ENCODE measurements at regions of chr7 and their contacts with region 1.

Region 1: GRCh38 chr7:35985126-35985754 is 167.8 kb upstream of the EEPD1 start:
- DNase-seq: peak; percentile 83 to 88 (median 84)
- ATAC-seq: peak; percentile 94 to 99 (median 96)
- H3K4me3 ChIP-seq: no peak overlapping the region
- H3K27ac ChIP-seq: no peak overlapping the region
- H3K4me1 ChIP-seq: peaks cover 0 to 3% (median 0%) of the 10 kb centered on the region in 12 donors
- H3K27me3 ChIP-seq: no peaks in the 10 kb centered on the region
- CTCF ChIP-seq: peak; percentile 87 to 97 (median 92)
- POLR2A ChIP-seq: no peak

Region 2: GRCh38 chr7:35701287-35701900 is 283.8 kb before region 1 on chr7:
- intact Hi-C with region 1: loop called in 1 of 10 experiments (anchors 10 kb)
- DNase-seq: no peak
- ATAC-seq: no peak
- H3K4me3 ChIP-seq: no peak overlapping the region
- H3K27ac ChIP-seq: no peak overlapping the region
- H3K4me1 ChIP-seq: peaks cover 0 to 2% (median 0%) of the 10 kb centered on the region in 12 donors
- H3K27me3 ChIP-seq: no peaks in the 10 kb centered on the region
- CTCF ChIP-seq: no peak
- POLR2A ChIP-seq: no peak

Region 3: DNA sequence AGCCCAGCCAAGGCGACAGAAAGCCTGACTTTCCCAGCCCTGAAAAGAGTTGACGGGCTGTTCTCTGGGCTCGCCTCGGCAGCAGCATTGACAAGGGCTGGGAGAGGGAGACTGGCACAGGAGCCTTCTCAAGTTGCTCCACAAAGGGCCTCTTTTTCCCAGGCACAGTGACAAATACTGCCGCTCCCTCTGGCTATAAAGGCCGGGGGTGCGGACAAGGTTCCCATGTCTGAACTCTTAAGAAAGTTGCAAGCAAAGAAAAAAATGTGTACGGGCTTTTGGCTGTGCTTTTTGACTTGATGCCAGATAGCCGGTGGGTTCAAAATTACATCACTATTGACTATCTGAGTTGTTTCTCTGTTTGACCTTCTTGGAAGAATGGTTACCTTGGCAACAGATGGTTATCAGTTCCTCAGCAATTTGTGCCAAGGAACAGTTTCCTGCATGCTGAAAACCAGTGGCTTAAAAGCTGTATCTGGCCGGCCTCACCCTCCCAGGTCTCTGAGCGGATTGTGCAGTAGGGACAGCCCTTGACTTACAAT is 52.0 kb after region 1 on chr7:
- intact Hi-C with region 1: loop called in 3 of 10 experiments (anchors 5 kb)
- DNase-seq: peak in 4 of 5 donors; percentile 58 to 73 (median 70)
- ATAC-seq: peak; percentile 74 to 87 (median 79)
- H3K4me3 ChIP-seq: peak overlapping the region in 1 of 12 donors; percentile 36
- H3K27ac ChIP-seq: peak overlapping the region; percentile 56 to 94 (median 84)
- H3K4me1 ChIP-seq: peaks cover 0 to 53% (median 35%) of the 10 kb centered on the region in 12 donors
- H3K27me3 ChIP-seq: no peaks in the 10 kb centered on the region
- CTCF ChIP-seq: peak in 1 of 12 donors; percentile 20
- POLR2A ChIP-seq: no peak

Region 4: DNA sequence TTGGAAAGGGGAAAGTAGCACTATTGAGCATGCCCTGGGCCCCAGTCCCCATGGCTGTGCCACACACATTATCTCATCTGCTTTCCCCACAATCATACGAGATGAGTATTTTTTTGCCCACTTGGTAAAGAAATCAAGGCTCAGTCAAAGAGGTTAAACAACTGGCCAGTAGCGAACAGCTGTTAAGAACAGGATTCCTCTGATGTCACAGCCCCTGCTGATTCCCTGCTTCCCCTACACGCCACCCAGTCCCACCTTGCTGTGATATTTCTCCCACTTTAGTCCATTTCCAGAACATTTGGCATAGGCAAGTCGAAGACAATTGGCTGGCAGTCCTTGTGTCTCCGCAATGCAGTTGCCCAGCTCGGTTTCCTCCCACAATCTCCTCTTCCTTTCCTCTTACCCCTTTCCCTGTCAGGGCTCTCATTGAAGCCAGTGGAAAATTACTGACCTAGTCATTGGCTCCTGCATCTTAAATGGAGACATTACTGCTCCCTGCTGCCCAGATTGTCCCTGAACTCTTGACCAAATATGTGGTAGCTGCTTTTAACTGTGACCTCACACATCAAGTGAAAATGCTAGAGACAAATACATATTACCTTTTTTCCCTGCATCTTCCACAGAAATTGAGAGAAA is 111.3 kb after region 1 on chr7:
- intact Hi-C with region 1: loop called in 9 of 10 experiments (anchors 5 to 10 kb)
- DNase-seq: no peak
- ATAC-seq: peak in 2 of 4 donors; percentile 59 to 85
- H3K4me3 ChIP-seq: no peak overlapping the region
- H3K27ac ChIP-seq: no peak overlapping the region
- H3K4me1 ChIP-seq: peaks cover 0 to 18% (median 5%) of the 10 kb centered on the region in 12 donors
- H3K27me3 ChIP-seq: no peaks in the 10 kb centered on the region
- CTCF ChIP-seq: peak in 7 of 12 donors; percentile 17 to 44 (median 31)
- POLR2A ChIP-seq: no peak

Region 5: DNA sequence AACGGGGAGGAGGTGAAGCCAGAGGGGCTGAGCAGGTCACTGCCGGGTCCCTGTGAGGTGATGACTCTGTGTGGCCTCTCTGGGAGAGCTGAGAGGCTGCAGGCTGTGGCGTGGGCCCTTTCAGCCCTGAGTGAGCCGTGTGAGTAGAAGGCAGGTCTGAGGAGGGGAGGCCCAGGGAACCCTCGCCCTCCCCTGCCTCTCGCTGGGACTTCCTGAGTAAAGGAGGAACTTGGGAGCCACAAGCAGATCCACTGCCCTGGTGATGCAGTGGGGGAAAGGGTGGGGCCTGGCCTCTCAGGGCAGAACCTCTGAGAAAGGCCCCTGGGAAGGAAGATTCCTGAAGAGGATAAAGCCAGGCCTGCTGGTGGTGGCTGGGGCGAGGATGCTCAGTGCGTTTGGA is 190.6 kb after region 1 on chr7:
- intact Hi-C with region 1: no loop called
- DNase-seq: peak; percentile 49 to 73 (median 57)
- ATAC-seq: peak; percentile 50 to 90 (median 78)
- H3K4me3 ChIP-seq: no peak overlapping the region
- H3K27ac ChIP-seq: peak overlapping the region in 9 of 12 donors; percentile 11 to 75 (median 40)
- H3K4me1 ChIP-seq: peaks cover 0 to 36% (median 10%) of the 10 kb centered on the region in 12 donors
- H3K27me3 ChIP-seq: no peaks in the 10 kb centered on the region
- CTCF ChIP-seq: no peak
- POLR2A ChIP-seq: no peak

Region 6: DNA sequence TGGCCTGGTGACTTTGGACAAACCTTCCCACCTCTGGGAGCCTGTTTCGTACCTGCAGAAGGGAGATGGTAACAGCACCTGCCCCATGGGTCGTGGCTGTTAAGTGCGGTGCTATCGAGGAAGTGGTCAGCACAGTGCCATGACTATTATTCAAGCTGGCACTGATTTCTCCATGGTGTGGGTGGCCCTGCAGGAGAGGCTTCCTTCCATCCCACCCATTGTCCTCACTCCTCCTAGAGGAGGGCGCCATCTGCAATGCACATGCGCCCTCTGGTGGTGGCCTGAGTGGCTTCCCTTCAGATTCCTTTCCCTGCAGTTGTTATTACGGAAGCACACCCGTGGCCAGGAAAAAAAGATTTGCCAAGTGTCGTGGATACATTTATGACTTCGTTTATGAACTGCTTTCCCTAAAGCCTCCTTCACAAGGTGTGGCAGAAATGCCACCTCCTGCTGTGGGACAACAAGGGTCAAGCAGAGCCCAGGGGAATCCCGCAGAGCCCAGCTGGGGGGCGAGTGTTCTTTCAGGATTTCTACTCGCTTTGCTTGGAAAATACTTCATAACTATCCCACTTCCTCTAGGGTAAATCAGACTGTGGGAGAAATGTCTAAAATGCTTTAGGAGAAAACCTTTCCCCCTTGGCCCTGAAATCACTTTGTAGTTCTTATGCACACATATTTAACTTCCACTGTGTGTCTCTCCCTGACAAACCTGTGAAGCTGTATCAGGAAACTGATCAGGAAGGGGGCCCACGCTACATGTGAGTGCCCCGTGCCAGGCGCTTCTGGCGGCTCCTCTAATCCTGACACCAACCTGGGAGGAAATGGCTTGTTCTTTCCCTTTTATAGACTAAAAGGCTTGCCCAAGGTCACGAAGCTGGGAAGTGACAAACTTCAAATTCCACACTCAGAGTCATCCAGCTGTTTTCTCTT is 306.4 kb after region 1 on chr7:
- intact Hi-C with region 1: loop called (anchors 1 to 2 kb)
- DNase-seq: peak; percentile 81 to 91 (median 88)
- ATAC-seq: peak; percentile 87 to 94 (median 92)
- H3K4me3 ChIP-seq: peak overlapping the region in 11 of 12 donors; percentile 9 to 59 (median 43)
- H3K27ac ChIP-seq: peak overlapping the region; percentile 8 to 86 (median 80)
- H3K4me1 ChIP-seq: peaks cover 0 to 49% (median 30%) of the 10 kb centered on the region in 12 donors
- H3K27me3 ChIP-seq: no peaks in the 10 kb centered on the region
- CTCF ChIP-seq: peak; percentile 93 to 99 (median 98)
- POLR2A ChIP-seq: no peak

Region 7: GRCh38 chr7:36312344-36313334 is 327.4 kb after region 1 on chr7:
- intact Hi-C with region 1: loop called in 2 of 10 experiments (anchors 2 to 5 kb)
- DNase-seq: no peak
- ATAC-seq: no peak
- H3K4me3 ChIP-seq: no peak overlapping the region
- H3K27ac ChIP-seq: no peak overlapping the region
- H3K4me1 ChIP-seq: peaks cover 0 to 15% (median 4%) of the 10 kb centered on the region in 12 donors
- H3K27me3 ChIP-seq: no peaks in the 10 kb centered on the region
- CTCF ChIP-seq: no peak
- POLR2A ChIP-seq: no peak

Region 8: DNA sequence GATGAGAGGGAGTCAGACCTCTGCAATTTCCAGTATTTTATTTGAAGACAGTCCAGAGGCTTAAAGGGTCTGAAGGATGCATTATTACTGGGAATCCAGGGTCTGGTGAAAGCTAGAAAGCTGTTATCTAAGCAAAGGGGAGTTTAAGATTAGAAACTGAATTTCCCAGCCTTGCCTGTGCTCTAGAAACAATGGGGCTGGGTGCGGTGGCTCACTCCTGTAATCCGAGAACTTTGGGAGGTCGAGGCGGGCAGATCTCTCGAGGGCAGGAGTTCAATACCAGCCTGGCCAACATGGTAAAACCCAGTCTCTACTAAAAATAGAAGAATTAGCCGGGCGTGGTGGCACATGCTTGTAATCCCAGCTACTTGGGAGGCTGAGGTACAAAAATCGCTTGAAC is 332.9 kb after region 1 on chr7:
- intact Hi-C with region 1: loop called in 9 of 10 experiments (anchors 1 to 5 kb)
- DNase-seq: no peak
- ATAC-seq: no peak
- H3K4me3 ChIP-seq: no peak overlapping the region
- H3K27ac ChIP-seq: no peak overlapping the region
- H3K4me1 ChIP-seq: peaks cover 0 to 8% (median 4%) of the 10 kb centered on the region in 12 donors
- H3K27me3 ChIP-seq: no peaks in the 10 kb centered on the region
- CTCF ChIP-seq: no peak
- POLR2A ChIP-seq: no peak

Region 9: GRCh38 chr7:36526863-36527548 is 541.8 kb after region 1 on chr7:
- intact Hi-C with region 1: no loop called
- DNase-seq: no peak
- ATAC-seq: no peak
- H3K4me3 ChIP-seq: no peak overlapping the region
- H3K27ac ChIP-seq: no peak overlapping the region
- H3K4me1 ChIP-seq: no peaks in the 10 kb centered on the region
- H3K27me3 ChIP-seq: peaks cover 0 to 4% (median 0%) of the 10 kb centered on the region in 9 donors
- CTCF ChIP-seq: no peak
- POLR2A ChIP-seq: no peak